Activated CD4-positive, alpha-beta memory T cell treated with anti-CD3 and anti-CD28 coated beads, Interleukin-2, amount 10 ng/mL, durations not matched to agents 7 days and 5 days (primary cell): ENCODE measurements at regions of chr19 and their contacts with region 1.

Region 1: DNA sequence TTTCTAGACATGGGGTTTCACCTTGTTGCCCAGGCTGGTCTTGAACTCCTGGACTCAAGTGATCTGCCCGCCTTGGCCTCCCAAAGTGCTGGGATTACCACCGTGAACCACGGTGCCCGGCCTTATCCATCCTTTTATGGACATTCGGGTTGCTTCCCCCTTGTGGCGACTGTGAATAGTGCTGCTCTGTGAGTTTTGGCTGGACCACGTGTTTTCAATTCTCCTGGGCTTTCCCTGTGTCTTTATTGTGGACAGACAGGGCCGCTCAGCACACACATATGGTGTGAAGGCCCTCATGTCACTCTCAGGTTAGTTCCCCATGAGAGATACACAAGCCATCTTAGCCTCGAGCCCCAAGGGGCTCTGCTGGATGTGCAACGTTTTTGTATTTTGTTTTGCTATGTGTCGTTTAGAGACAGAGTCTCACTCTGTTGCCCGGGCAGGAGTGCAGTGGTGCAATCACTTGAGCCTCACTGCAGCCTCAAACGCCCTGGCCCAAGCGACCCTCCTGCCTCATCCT is 40.5 kb downstream of the MAU2 start:
- DNase-seq: peak; percentile 79
- H3K4me3 Mint-ChIP-seq: no peak overlapping the region
- H3K27ac Mint-ChIP-seq: peak overlapping the region; percentile 14
- H3K4me1 Mint-ChIP-seq: peaks cover 31% of the 10 kb centered on the region
- H3K27me3 Mint-ChIP-seq: no peaks in the 10 kb centered on the region

Region 2: DNA sequence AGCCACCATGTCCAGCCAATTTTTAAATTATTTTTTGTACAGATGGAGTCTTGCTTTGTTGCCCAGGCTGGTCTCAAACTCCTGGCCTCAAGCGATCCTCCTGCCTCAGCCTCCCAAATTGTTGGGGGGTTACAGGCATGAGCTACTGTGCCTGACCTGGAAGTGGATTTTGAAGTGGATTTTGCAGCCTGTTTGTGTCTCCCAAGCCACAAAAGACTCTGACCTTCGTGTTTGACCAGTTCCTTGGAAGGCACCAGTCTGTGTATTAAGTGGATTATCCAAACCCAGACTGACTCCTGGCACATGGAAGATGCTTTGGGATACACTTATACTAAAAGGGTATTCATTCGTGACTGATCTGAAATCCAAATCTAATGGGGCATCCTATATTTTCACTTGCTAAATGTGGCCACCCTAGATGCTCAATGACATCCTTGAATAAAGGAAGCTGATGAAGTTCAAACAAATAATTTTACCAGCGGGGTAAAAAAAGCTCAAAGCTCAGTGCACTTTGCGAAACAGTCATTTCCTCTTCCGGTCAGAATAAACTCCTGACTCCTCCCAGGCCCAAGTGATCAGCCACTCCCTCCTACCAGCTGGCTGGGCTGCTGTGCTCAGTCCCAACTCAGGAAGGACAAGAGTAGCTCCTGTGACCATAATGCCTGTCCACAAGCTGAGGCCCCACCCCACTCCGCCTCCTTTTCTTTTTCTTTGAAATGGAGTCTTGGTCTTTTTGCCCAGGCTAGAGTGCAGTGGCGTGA is 11.7 kb after region 1 on chr19:
- CTCF ChIA-PET with region 1: interaction called, 9 read pairs
- POLR2A ChIA-PET with region 1: interaction called, 27 read pairs
- DNase-seq: peak; percentile 67
- H3K4me3 Mint-ChIP-seq: peak overlapping the region; percentile 19
- H3K27ac Mint-ChIP-seq: peak overlapping the region; percentile 92
- H3K4me1 Mint-ChIP-seq: peaks cover 14% of the 10 kb centered on the region
- H3K27me3 Mint-ChIP-seq: no peaks in the 10 kb centered on the region

Region 3: GRCh38 chr19:19385108-19385899 is 24.2 kb after region 1 on chr19:
- CTCF ChIA-PET with region 1: interaction called, 9 read pairs
- POLR2A ChIA-PET with region 1: interaction called, 14 read pairs
- DNase-seq: peak; percentile 100
- H3K4me3 Mint-ChIP-seq: peak overlapping the region; percentile 87
- H3K27ac Mint-ChIP-seq: peak overlapping the region; percentile 91
- H3K4me1 Mint-ChIP-seq: peaks cover 46% of the 10 kb centered on the region
- H3K27me3 Mint-ChIP-seq: no peaks in the 10 kb centered on the region

Region 4: GRCh38 chr19:19404879-19405860 is 44.0 kb after region 1 on chr19 and contains the start of gene GATAD2A:
- CTCF ChIA-PET with region 1: interaction called, 33 read pairs
- POLR2A ChIA-PET with region 1: interaction called, 24 read pairs
- DNase-seq: peak; percentile 91
- H3K4me3 Mint-ChIP-seq: peak within 1 kb of the TSS; percentile 91
- H3K27ac Mint-ChIP-seq: peak within 1 kb of the TSS; percentile 88
- H3K4me1 Mint-ChIP-seq: peaks cover 64% of the 10 kb centered on the region
- H3K27me3 Mint-ChIP-seq: no peaks in the 10 kb centered on the region
- total RNA-seq, gene GATAD2A: 109 to 113 TPM

Region 5: GRCh38 chr19:19515764-19516519 is 154.8 kb after region 1 on chr19 and contains the start of gene NDUFA13:
- CTCF ChIA-PET with region 1: interaction called, 3 read pairs
- POLR2A ChIA-PET with region 1: interaction called, 15 read pairs
- DNase-seq: peak; percentile 95
- H3K4me3 Mint-ChIP-seq: peak within 1 kb of the TSS; percentile 93
- H3K27ac Mint-ChIP-seq: peak within 1 kb of the TSS; percentile 94
- H3K4me1 Mint-ChIP-seq: peaks cover 33% of the 10 kb centered on the region
- H3K27me3 Mint-ChIP-seq: no peaks in the 10 kb centered on the region
- total RNA-seq, gene NDUFA13: 371 to 388 TPM